B cell (primary cell): ENCODE measurements at regions of chr3 and their contacts with region 1.

Region 1: DNA sequence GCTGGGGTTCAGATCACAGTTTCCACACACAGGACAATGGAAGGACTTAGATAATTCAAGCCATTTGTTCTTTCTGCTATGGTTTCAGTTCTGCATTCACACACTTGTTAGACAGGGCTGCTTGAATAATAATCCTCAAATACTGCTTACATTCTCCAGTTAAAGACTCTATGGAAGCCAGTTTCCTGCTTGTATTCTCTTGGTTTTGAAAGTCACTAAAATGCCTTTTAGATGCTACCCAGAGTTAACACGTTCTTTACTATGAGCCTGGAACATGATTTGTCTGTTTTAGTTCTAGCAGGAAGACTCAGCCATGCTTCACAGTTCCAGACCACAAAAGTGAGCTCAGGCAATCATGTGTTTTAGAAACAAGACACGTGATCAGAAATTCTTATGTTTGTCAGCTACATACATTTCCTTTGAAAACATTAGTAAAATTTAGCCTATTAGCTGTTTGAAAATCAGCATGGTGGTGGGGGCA is 152.4 kb downstream of the LEKR1 start:
- DNase-seq: peak; percentile 87
- ATAC-seq: peak; percentile 86
- H3K4me3 ChIP-seq: peak overlapping the region in 3 of 5 experiments; percentile 0 to 53 (median 5)
- H3K4me3 Mint-ChIP-seq: peak overlapping the region; percentile 74
- H3K27ac ChIP-seq: peak overlapping the region; percentile 74 to 93
- H3K27ac Mint-ChIP-seq: peak overlapping the region; percentile 97
- H3K4me1 ChIP-seq: peaks cover 36 to 43% of the 10 kb centered on the region in 2 donors
- H3K4me1 Mint-ChIP-seq: peaks cover 51% of the 10 kb centered on the region
- H3K27me3 ChIP-seq: no peaks in the 10 kb centered on the region
- H3K27me3 Mint-ChIP-seq: no peaks in the 10 kb centered on the region
- CTCF ChIP-seq: no peak

Region 2: DNA sequence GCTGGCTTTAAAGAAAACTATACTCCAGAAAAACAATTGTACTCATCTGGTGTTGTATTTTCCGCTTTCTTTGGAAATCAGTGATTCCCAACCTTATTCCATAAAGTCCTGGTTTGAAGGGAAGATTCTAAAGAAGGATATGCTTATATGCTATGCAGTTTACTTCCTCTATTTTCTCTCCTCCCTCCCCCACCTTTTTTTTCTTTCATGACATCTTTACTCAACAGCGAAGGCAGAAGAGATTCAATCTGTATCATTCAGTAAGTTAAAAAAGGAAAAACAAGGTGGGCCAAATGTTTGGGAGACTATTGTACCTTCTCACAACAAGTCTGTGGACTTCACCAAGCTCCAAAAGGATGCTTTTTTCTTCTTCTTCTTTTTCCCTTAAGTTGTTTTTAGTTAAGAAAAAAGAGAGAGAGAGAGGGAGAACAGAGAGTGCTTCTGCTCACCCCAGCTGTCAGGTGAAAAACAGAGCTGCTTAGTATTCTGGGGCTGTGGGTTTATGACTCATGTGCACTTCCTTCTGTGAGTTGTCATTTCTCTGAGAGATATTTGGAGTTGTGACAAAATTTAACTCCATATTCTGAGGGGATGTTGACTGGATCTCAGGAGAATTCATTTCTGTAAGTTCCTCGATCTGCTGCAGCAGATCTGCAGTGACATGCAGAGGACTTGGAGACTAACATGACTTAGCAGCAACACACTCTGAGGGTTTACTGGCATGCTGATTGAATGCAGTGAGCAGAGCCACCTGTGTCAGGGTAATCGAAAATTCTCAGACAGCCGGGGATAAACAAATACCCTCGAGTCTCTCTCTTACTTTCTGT is 494.3 kb before region 1 on chr3:
- CTCF ChIA-PET with region 1: no interaction called
- POLR2A ChIA-PET with region 1: no interaction called
- intact Hi-C with region 1: loop called (anchors 10 kb)
- DNase-seq: peak; percentile 62
- ATAC-seq: peak; percentile 79
- H3K4me3 ChIP-seq: peak overlapping the region in 2 of 5 experiments; percentile 36 to 59
- H3K4me3 Mint-ChIP-seq: peak overlapping the region; percentile 69
- H3K27ac ChIP-seq: peak overlapping the region; percentile 78 to 83
- H3K27ac Mint-ChIP-seq: peak overlapping the region; percentile 28
- H3K4me1 ChIP-seq: peaks cover 24 to 25% of the 10 kb centered on the region in 2 donors
- H3K4me1 Mint-ChIP-seq: peaks cover 30% of the 10 kb centered on the region
- H3K27me3 ChIP-seq: no peaks in the 10 kb centered on the region
- H3K27me3 Mint-ChIP-seq: peaks cover 1% of the 10 kb centered on the region
- CTCF ChIP-seq: no peak

Region 3: GRCh38 chr3:157029365-157029790 is 50.9 kb after region 1 on chr3:
- CTCF ChIA-PET with region 1: interaction called, 4 read pairs
- POLR2A ChIA-PET with region 1: no interaction called
- intact Hi-C with region 1: loop called (anchors 1 kb)
- DNase-seq: peak; percentile 85
- ATAC-seq: peak; percentile 93
- H3K4me3 ChIP-seq: no peak overlapping the region
- H3K4me3 Mint-ChIP-seq: peak overlapping the region; percentile 44
- H3K27ac ChIP-seq: peak overlapping the region in 1 of 2 donors; percentile 17
- H3K27ac Mint-ChIP-seq: peak overlapping the region; percentile 72
- H3K4me1 ChIP-seq: peaks cover 14 to 26% of the 10 kb centered on the region in 2 donors
- H3K4me1 Mint-ChIP-seq: peaks cover 28% of the 10 kb centered on the region
- H3K27me3 ChIP-seq: no peaks in the 10 kb centered on the region
- H3K27me3 Mint-ChIP-seq: no peaks in the 10 kb centered on the region
- CTCF ChIP-seq: no peak

Region 4: DNA sequence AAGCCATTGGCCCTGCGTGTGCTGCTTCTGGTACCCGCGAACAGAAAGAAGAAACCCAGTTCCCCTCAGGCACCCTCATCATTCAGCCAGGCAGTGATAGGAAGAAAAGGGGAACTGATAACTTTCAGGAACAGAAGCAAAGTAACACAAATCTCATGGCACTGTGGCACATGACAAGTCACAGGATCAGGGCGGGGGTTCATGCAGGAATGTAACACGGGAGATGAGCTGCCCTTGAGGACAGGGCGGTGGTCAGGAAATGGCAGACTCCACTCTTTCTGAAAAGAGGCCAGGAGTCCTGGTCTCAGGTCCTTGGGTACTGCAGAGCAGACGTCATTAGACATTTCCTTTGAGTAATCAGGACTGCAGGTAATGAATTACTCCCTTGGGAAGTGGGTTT is 85.9 kb after region 1 on chr3:
- CTCF ChIA-PET with region 1: no interaction called
- POLR2A ChIA-PET with region 1: no interaction called
- intact Hi-C with region 1: loop called (anchors 1 kb)
- DNase-seq: peak; percentile 75
- ATAC-seq: peak; percentile 72
- H3K4me3 ChIP-seq: peak overlapping the region in 1 of 5 experiments; percentile 6
- H3K4me3 Mint-ChIP-seq: peak overlapping the region; percentile 18
- H3K27ac ChIP-seq: no peak overlapping the region
- H3K27ac Mint-ChIP-seq: peak overlapping the region; percentile 10
- H3K4me1 ChIP-seq: peaks cover 27 to 40% of the 10 kb centered on the region in 2 donors
- H3K4me1 Mint-ChIP-seq: peaks cover 32% of the 10 kb centered on the region
- H3K27me3 ChIP-seq: no peaks in the 10 kb centered on the region
- H3K27me3 Mint-ChIP-seq: no peaks in the 10 kb centered on the region
- CTCF ChIP-seq: no peak

Region 5: GRCh38 chr3:157081681-157082210 is 103.2 kb after region 1 on chr3:
- CTCF ChIA-PET with region 1: interaction called, 10 read pairs
- POLR2A ChIA-PET with region 1: interaction called, 4 read pairs
- intact Hi-C with region 1: loop called (anchors 2 kb)
- DNase-seq: peak; percentile 86
- ATAC-seq: peak; percentile 99
- H3K4me3 ChIP-seq: no peak overlapping the region
- H3K4me3 Mint-ChIP-seq: peak overlapping the region; percentile 2
- H3K27ac ChIP-seq: no peak overlapping the region
- H3K27ac Mint-ChIP-seq: peak overlapping the region; percentile 63
- H3K4me1 ChIP-seq: peaks cover 9 to 11% of the 10 kb centered on the region in 2 donors
- H3K4me1 Mint-ChIP-seq: peaks cover 11% of the 10 kb centered on the region
- H3K27me3 ChIP-seq: peaks cover 0 to 4% (median 0%) of the 10 kb centered on the region in 4 experiments
- H3K27me3 Mint-ChIP-seq: peaks cover 8% of the 10 kb centered on the region
- CTCF ChIP-seq: peak; percentile 96

Region 6: GRCh38 chr3:157088601-157089454 is 110.3 kb after region 1 on chr3:
- CTCF ChIA-PET with region 1: interaction called, 9 read pairs
- POLR2A ChIA-PET with region 1: no interaction called
- intact Hi-C with region 1: loop called (anchors 1 kb)
- DNase-seq: peak; percentile 96
- ATAC-seq: peak; percentile 91
- H3K4me3 ChIP-seq: peak overlapping the region; percentile 56 to 92 (median 80)
- H3K4me3 Mint-ChIP-seq: peak overlapping the region; percentile 94
- H3K27ac ChIP-seq: peak overlapping the region; percentile 76 to 98
- H3K27ac Mint-ChIP-seq: peak overlapping the region; percentile 98
- H3K4me1 ChIP-seq: peaks cover 19 to 25% of the 10 kb centered on the region in 2 donors
- H3K4me1 Mint-ChIP-seq: peaks cover 25% of the 10 kb centered on the region
- H3K27me3 ChIP-seq: peaks cover 0 to 2% (median 0%) of the 10 kb centered on the region in 4 experiments
- H3K27me3 Mint-ChIP-seq: peaks cover 8% of the 10 kb centered on the region
- CTCF ChIP-seq: no peak